Colonic mucosa (tissue), 4 donors: ENCODE measurements at regions of chr1 and their contacts with region 1.

Region 1: DNA sequence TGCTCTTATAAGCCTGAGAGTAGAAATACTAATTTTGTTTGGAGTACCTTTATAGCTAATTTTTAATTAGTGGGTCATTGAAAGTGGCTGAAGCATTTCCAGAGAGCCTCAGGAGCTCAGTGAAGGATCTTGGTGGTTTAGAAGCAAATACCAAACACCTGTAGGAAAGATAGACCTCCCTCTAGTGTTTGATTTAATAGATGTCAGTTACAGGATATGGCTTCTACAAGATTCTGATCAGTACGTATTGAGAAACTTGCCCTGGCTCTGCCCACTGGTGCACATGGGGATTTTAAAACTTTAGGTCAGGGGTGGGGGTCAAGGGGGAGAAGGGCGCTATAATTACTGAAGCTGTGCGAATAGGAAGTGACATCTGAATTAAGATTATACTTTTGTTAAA is 122.2 kb downstream of the POU2F1 start:
- DNase-seq: no peak
- H3K4me3 ChIP-seq: no peak overlapping the region
- H3K27ac ChIP-seq: no peak overlapping the region
- H3K4me1 ChIP-seq: no peaks in the 10 kb centered on the region
- H3K27me3 ChIP-seq: no peaks in the 10 kb centered on the region
- CTCF ChIP-seq: no peak

Region 2: GRCh38 chr1:166814611-166815010 is 528.2 kb before region 1 on chr1:
- intact Hi-C with region 1: no loop called
- DNase-seq: no peak
- H3K4me3 ChIP-seq: no peak overlapping the region
- H3K27ac ChIP-seq: no peak overlapping the region
- H3K4me1 ChIP-seq: no peaks in the 10 kb centered on the region
- H3K27me3 ChIP-seq: no peaks in the 10 kb centered on the region
- CTCF ChIP-seq: no peak

Region 3: DNA sequence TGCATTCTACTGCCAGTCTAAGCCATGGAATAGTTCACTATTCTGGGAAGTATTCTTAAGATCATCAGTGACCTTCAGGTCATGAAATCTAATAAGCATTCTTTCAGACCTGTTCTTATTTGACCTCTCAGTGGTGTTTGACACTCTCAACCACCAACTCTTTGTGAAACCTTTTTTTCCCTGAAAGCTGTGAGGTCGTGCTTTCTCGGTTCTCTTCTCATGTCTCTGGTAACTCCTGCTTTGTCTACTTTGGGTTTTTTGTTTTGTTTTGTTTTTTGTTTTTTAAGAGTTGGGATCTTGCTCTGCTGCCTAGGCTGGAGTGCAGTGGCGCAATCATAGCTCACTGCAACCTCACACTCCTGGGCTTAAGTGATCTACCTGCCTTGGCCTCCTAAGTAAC is 65.9 kb before region 1 on chr1:
- intact Hi-C with region 1: no loop called
- DNase-seq: no peak
- H3K4me3 ChIP-seq: no peak overlapping the region
- H3K27ac ChIP-seq: no peak overlapping the region
- H3K4me1 ChIP-seq: no peaks in the 10 kb centered on the region
- H3K27me3 ChIP-seq: no peaks in the 10 kb centered on the region
- CTCF ChIP-seq: no peak

Region 4: DNA sequence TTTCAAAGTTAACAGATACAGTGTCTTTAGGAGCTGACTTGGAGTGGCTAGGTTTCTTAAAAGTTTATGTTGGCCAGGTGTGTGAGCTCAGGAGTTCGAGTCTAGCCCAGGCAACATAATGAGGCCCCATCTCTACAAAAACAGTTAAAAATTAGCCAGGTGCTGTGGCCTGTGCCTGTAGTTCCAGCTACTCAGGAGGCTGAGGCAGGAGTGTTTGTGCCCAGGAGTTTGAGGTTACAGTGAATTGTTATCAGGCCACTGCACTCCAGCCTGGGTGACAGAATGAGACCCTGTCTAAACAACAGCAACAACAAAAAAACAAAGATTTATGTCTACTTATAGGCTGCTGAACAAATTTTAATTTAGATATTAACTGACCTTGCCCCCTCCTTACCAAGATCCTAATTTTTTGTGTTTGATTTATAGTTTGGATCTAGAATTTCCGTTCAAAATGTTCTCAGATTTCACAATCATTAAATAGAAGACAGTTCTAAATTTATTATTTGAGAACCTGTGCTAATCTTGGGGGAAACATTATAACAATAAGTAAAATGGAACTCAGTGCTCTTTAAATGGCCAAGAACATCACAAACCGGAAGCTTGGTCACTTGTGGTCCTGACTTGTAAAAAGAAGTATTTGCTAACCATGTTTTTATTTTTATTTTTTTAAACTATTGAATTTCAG is 54.3 kb before region 1 on chr1:
- intact Hi-C with region 1: loop called (anchors 5 kb)
- DNase-seq: no peak
- H3K4me3 ChIP-seq: no peak overlapping the region
- H3K27ac ChIP-seq: no peak overlapping the region
- H3K4me1 ChIP-seq: no peaks in the 10 kb centered on the region
- H3K27me3 ChIP-seq: no peaks in the 10 kb centered on the region
- CTCF ChIP-seq: no peak